MCF 10A (cell line): ENCODE measurements at regions of chr5 and their contacts with region 1.

Region 1: GRCh38 chr5:142548739-142549275 is 137.1 kb downstream of the FGF1 start:
- DNase-seq: peak; percentile 97
- H3K4me3 Mint-ChIP-seq: no peak overlapping the region
- H3K27ac Mint-ChIP-seq: no peak overlapping the region
- H3K4me1 Mint-ChIP-seq: peaks cover 26% of the 10 kb centered on the region
- H3K27me3 Mint-ChIP-seq: no peaks in the 10 kb centered on the region
- CTCF ChIP-seq: peak; percentile 99

Region 2: DNA sequence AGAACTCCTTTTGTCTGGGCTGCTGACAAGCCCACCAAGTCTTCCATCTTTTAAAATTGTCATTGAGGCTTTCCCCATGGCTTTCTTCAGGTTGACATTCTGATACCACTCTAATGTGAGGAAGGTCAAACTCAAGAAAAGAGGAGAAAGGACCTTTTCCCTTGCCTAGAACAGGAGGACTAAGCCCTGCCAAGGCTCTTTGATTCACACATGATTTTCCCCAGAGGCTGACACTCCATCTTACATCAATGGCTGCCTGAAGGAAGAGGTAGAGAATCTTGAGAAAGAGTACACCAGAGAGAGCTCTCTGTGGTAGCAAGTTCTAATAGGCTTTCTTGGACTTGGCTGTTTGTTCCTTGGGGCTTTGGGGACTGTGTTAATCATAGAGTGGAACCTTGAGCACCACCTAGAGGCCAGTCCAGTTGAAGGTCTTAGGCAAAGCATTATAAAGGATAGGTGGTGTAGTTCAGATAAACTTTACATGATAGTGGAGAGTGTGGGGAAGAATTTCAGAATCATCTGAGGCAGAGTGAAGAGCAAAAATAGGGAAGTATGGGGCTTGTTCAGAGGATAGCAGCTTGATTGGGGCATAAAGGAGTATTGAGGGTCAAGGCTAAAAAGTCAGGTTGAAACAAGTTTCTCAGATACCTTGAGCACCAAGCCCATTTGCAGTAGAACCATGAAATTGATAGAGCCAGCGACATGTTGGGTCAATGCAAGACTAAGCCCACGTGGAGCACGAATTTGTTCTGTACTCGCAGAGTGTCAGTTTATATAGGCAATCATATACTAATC is 403.5 kb before region 1 on chr5:
- CTCF ChIA-PET with region 1: interaction called, 158 read pairs
- POLR2A ChIA-PET with region 1: interaction called, 3 read pairs
- intact Hi-C with region 1: no loop called
- DNase-seq: peak; percentile 85
- H3K4me3 Mint-ChIP-seq: no peak overlapping the region
- H3K27ac Mint-ChIP-seq: no peak overlapping the region
- H3K4me1 Mint-ChIP-seq: no peaks in the 10 kb centered on the region
- H3K27me3 Mint-ChIP-seq: no peaks in the 10 kb centered on the region
- CTCF ChIP-seq: peak; percentile 78

Region 3: GRCh38 chr5:142167458-142167857 is 381.3 kb before region 1 on chr5:
- CTCF ChIA-PET with region 1: interaction called, 6 read pairs
- POLR2A ChIA-PET with region 1: no interaction called
- intact Hi-C with region 1: loop called (anchors 5 kb)
- DNase-seq: peak; percentile 24
- H3K4me3 Mint-ChIP-seq: no peak overlapping the region
- H3K27ac Mint-ChIP-seq: no peak overlapping the region
- H3K4me1 Mint-ChIP-seq: peaks cover 8% of the 10 kb centered on the region
- H3K27me3 Mint-ChIP-seq: no peaks in the 10 kb centered on the region
- CTCF ChIP-seq: peak; percentile 32

Region 4: DNA sequence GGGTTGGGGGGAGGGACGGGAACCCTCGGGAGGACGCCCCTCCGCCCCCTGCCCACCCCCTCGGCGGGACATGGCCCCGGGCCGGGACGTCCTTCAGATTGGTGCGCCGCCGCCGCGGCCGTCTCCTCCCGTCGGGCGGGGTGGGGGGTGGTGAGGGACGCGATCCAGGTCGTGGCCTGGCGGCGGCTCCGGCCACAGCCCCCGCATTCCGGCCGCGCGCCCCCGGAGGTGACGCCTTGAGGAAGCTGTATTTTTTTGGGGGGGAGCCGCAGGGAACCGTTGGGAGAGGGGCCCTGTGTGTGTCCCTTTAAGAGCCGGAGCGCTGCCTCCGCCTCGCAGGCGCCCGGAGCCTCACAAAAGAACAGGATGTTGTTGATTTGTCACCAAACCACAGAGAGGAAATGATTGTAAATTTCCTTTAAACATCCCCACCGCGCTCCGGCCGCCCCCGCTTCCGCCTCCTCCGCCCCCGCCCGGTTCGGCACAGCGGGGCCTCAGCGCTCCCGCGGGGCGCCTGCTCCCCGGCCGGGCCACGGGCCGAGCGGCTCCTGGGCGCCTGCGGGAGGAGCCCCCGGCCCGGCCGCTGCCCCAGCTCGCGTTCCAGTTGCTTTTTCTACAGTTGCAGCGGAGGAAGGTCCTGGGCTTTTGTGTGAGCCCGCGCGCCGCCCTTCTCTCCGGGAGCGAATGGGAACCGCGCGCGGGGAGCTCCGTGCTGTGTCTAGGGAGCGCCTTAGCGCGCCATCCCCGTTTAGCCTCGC is 191.9 kb before region 1 on chr5:
- CTCF ChIA-PET with region 1: interaction called, 10 read pairs
- POLR2A ChIA-PET with region 1: no interaction called
- intact Hi-C with region 1: loop called (anchors 1 kb)
- DNase-seq: peak; percentile 95
- H3K4me3 Mint-ChIP-seq: peak overlapping the region; percentile 82
- H3K27ac Mint-ChIP-seq: peak overlapping the region; percentile 86
- H3K4me1 Mint-ChIP-seq: peaks cover 6% of the 10 kb centered on the region
- H3K27me3 Mint-ChIP-seq: no peaks in the 10 kb centered on the region
- CTCF ChIP-seq: no peak

Region 5: DNA sequence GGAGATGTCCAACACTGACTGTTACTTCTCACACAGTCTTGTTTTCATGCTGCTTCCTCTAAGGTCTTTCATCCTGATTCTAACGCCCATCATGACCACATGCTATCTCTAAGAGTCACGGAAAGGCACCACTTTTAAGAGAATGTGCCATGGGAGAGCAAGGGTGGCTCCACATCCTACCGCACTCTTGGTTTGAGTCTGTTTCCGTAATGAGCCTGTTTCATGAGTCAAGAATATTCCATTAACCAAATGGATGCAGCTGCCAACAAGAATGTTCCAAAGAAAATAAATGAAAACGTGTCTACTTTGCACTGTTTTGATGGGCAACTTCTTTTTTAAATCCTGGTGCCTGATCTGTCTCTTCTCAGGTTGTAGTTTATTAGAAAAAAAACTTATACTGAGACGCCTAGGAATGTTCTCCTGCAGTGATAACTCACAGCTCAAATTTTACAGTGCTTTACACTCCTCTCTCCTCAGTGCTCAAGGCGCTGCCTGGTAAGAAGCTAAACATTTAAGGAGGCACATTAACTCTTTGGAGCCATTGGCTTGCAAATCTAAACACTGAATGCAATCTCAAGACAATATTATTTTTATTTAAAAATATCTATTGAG is 12.8 kb after region 1 on chr5:
- CTCF ChIA-PET with region 1: interaction called, 11 read pairs
- POLR2A ChIA-PET with region 1: no interaction called
- intact Hi-C with region 1: no loop called
- DNase-seq: no peak
- H3K4me3 Mint-ChIP-seq: no peak overlapping the region
- H3K27ac Mint-ChIP-seq: no peak overlapping the region
- H3K4me1 Mint-ChIP-seq: no peaks in the 10 kb centered on the region
- H3K27me3 Mint-ChIP-seq: no peaks in the 10 kb centered on the region
- CTCF ChIP-seq: no peak